ENCODE measurements at regions of chr19 and their contacts with region 1.

Region 1: GRCh38 chr19:14347999-14348889 is 33.0 kb upstream of the ADGRE5 start:
- ATAC-seq: peak; percentile 46 to 91 (median 76)
- H3K4me3 ChIP-seq: peak overlapping the region in 2 of 5 donors; percentile 4 to 5
- H3K27ac ChIP-seq: no peak overlapping the region
- H3K4me1 ChIP-seq: no peaks in the 10 kb centered on the region

Region 2: DNA sequence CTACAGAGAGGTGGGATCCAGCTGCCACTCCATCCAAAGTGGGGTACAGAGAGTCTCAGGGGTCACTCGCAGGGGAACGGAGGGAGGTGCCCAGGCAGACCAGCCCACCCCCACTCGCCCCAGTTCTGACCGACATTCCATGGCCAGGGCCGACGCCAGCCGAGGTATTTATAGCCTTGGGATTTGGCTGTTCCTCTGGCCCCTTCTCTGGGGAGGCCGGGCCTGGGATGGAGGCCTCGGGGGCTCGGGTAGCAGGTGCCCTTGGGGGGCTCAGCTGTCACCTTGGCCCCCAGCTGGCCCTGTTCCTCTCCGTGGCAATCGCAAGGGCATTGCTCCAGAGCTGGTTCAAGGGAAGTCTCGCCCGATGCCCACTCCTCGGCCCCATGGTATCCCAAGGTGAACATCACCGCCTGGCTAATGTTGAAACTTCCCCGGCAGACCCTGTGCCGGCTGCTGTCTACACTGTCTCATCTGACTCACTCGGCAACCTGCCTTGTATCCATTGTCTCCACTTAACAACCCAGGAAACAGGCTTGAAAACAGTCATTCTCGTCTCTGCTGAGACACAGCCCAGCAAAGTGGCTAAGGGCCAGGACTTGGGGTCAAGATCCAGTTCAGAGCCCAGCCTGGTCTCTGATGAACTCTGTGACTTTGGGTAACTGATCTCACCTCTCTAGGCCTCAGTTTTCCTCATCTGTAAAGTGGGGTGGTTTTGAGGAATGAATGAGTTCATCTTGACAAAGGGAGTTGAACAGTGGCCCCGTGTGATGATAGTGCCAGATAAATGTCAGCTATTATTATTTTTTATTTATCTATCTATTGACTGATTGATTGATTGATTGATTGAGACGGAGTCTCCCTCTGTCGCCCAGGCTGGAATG is 240.4 kb before region 1 on chr19:
- in situ Hi-C with region 1: no loop called
- ATAC-seq: no peak
- H3K4me3 ChIP-seq: no peak overlapping the region
- H3K27ac ChIP-seq: no peak overlapping the region
- H3K4me1 ChIP-seq: peaks cover 5% of the 10 kb centered on the region in 2 donors

Region 3: DNA sequence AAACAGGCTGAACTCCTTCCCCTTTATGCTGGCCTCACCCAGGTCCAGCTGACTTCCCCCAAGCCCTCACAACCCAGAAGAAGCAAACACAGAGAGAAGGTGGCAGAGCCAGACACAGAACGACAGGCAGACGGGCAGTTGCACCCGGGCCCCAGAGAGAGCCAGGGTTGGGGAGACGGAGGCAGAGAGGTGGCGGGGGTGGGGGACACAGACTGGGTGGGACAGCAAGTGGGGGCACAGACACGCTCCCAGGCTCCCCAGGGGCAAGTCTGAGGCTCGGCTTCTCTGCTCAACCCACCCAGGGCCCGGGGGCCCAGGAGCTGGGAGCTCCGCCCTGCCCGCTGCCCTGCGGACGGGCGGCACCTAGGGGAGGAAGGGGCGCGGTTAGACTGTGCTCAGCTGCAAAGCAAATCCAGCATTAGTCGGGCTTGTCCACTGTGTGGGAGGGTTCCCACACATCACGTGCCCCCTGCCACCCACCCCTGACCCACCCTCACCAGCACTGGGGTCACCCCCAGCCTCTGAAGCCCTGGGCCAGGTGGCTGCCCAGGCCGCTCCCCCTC is 180.6 kb before region 1 on chr19:
- in situ Hi-C with region 1: loop called in 1 of 9 experiments (anchors 25 kb)
- ATAC-seq: peak in 7 of 8 experiments; percentile 16 to 97 (median 32)
- H3K4me3 ChIP-seq: no peak overlapping the region
- H3K27ac ChIP-seq: no peak overlapping the region
- H3K4me1 ChIP-seq: peaks cover 11 to 12% of the 10 kb centered on the region in 2 donors

Measured in motor neuron (in vitro differentiated cells).